CD4-positive, alpha-beta memory T cell (primary cell): ENCODE measurements at regions of chr6 and their contacts with region 1.

Region 1: GRCh38 chr6:143536865-143537691 is 25.6 kb upstream of the FUCA2 start:
- DNase-seq: peak; percentile 53 to 64 (median 61)
- H3K4me3 ChIP-seq: peak overlapping the region; percentile 36 to 71
- H3K4me3 Mint-ChIP-seq: peak overlapping the region; percentile 88 to 95 (median 92)
- H3K27ac ChIP-seq: peak overlapping the region; percentile 73
- H3K27ac Mint-ChIP-seq: peak overlapping the region; percentile 91 to 96 (median 96)
- H3K4me1 ChIP-seq: peaks cover 54% of the 10 kb centered on the region
- H3K4me1 Mint-ChIP-seq: peaks cover 35 to 55% (median 47%) of the 10 kb centered on the region in 4 donors
- H3K27me3 ChIP-seq: no peaks in the 10 kb centered on the region
- H3K27me3 Mint-ChIP-seq: no peaks in the 10 kb centered on the region

Region 2: DNA sequence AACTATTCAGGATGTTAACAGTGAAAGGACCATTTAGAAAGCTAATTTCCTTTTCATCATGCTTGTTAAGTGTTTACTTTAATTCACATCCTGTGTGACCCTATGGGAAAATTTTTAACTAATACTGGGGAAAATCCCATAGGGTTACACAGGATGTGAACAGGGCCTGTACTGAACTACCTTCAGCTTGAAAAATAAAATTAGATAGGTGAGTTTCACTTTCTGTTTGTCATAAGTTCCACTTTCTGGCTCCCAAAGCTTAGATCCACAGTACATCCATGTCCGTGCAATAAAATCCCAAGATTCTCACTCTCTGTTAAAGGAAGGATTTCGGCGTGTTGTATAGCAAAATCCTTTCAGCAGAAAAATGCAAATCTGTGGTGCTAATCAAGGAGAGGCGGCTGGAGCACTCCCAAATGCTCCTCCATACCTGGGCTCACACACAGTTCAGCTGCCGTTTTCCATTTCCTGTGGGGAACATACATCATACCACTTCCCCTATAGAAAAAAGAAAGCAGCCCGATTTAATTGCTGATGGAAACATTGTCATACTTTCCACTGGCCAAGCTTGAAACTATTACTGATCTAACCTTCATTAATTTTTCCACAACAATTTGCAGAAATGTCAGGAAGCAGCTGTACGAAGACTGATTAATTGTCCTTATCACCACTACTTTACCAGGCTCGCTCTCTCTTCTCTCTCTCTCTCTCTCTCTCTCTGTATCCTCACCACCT is 717.3 kb before region 1 on chr6:
- CTCF ChIA-PET with region 1: no interaction called
- POLR2A ChIA-PET with region 1: no interaction called
- intact Hi-C with region 1: no loop called
- DNase-seq: peak; percentile 45 to 84 (median 52)
- H3K4me3 ChIP-seq: peak overlapping the region; percentile 37 to 48
- H3K4me3 Mint-ChIP-seq: peak overlapping the region; percentile 76 to 92 (median 90)
- H3K27ac ChIP-seq: peak overlapping the region; percentile 76
- H3K27ac Mint-ChIP-seq: peak overlapping the region; percentile 87 to 100 (median 94)
- H3K4me1 ChIP-seq: peaks cover 88% of the 10 kb centered on the region
- H3K4me1 Mint-ChIP-seq: peaks cover 62 to 84% (median 71%) of the 10 kb centered on the region in 4 donors
- H3K27me3 ChIP-seq: no peaks in the 10 kb centered on the region
- H3K27me3 Mint-ChIP-seq: peaks cover 0 to 3% of the 10 kb centered on the region in 2 donors

Region 3: DNA sequence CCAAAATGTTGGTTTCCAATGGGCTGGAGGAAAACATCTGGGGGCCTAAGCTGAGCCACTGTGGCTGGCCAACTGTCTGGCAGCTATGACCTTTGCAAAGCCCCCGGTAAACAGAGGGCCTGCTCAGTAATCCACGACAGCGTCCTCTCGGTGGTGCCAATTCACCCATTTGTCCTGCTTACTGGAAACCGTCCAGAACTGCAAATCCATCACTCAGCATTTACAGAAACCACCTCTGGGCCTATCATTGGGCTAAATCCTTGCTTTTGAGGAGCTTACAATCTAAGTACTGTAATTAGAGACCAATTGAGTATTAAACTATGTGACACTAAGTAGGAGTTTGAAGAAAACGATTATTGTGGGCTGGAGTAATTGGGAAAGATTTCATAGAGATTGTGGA is 117.6 kb before region 1 on chr6:
- CTCF ChIA-PET with region 1: no interaction called
- POLR2A ChIA-PET with region 1: no interaction called
- intact Hi-C with region 1: no loop called
- DNase-seq: no peak
- H3K4me3 ChIP-seq: no peak overlapping the region
- H3K4me3 Mint-ChIP-seq: no peak overlapping the region
- H3K27ac ChIP-seq: no peak overlapping the region
- H3K27ac Mint-ChIP-seq: no peak overlapping the region
- H3K4me1 ChIP-seq: no peaks in the 10 kb centered on the region
- H3K4me1 Mint-ChIP-seq: no peaks in the 10 kb centered on the region
- H3K27me3 ChIP-seq: no peaks in the 10 kb centered on the region
- H3K27me3 Mint-ChIP-seq: no peaks in the 10 kb centered on the region

Region 4: DNA sequence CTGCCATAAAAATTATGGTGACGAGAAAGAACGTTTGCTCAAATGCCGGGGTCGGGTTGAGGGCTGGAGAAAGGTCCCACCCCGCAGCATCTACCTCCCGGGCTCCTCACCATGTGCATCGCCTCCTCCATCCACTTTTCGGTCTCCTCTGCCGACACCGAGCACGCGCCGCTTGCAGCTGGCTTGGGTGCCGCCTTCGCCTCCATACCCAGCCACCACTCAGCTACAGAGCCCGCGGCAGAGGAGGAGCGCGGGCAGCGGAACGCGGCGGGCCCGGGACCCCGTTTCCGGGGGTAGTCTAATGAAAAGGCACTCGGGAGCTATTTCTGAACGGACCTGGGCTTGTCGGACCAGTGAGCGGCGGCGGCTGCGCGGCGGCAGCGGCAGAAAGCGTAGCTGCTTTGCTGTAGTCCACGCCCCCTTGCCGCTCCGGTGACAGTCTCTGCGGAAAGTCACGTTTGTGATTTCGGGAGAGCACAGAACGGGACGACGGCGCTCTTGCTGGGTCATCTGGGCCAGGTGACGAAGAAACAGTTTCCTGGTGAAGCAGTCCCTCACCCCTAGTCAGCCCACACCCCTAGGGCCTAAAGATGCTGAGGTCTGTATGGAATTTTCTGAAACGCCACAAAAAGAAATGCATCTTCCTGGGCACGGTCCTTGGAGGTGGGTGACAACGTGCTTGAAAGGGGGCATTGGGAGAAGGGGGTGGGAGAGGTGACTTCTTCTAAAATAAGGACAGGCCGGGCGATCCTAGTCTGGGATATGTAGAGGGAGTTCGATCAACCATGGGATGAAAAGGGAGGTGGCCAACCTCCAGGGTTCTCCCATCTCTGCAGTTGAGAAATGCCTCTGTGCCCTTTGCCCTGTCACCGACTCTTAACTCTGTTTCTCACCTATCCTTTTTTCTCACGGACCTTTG is 86.4 kb before region 1 on chr6 and contains the starts of genes ADAT2 and PEX3:
- CTCF ChIA-PET with region 1: no interaction called
- POLR2A ChIA-PET with region 1: interaction called, 10 read pairs
- intact Hi-C with region 1: loop called (anchors 2 kb)
- DNase-seq: peak; percentile 94 to 95 (median 94)
- H3K4me3 ChIP-seq: peak within 1 kb of the TSS; percentile 95 to 99
- H3K4me3 Mint-ChIP-seq: peak within 1 kb of the TSS; percentile 94 to 100 (median 98)
- H3K27ac ChIP-seq: peak within 1 kb of the TSS; percentile 67
- H3K27ac Mint-ChIP-seq: peak within 1 kb of the TSS; percentile 86 to 99 (median 97)
- H3K4me1 ChIP-seq: peaks cover 28% of the 10 kb centered on the region
- H3K4me1 Mint-ChIP-seq: peaks cover 25 to 49% (median 36%) of the 10 kb centered on the region in 4 donors
- H3K27me3 ChIP-seq: no peaks in the 10 kb centered on the region
- H3K27me3 Mint-ChIP-seq: no peaks in the 10 kb centered on the region
- total RNA-seq, gene ADAT2: 10.5 to 11.2 TPM
- total RNA-seq, gene PEX3: 20.8 to 23.5 TPM

Region 5: DNA sequence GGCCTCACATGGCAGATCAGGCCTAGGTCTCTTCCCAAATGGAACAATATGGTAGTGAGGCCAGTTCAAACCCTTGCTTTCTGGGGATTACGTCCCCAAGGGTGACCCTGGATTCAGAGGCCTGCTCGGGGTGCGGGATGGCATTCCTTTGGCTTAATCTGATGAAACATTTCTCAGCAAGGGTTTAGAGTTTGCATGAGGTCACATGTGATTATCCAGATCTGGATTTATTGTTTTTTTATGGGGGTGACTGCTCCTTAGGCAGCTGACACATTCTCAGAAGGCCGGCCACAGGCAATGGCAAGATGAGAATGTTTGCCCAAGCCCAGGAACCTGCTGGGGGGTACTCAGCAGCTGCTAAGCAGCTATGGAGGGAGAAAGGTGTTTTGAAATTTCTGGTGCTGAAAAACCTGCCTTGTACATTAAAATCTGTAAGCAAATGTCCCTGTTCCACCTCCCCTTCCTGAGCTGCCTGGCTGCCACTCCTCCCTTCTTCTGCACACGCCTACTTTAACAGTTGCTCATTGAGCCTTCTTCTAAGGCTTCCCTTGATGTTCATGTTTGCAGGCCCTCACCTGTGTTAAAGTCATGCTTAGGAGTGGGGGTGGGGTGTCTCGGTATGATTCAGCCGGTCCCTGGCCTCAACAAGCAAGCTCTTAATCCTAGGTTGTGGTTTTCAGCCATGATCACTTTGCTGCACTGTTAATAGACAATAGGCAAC is 12.3 kb after region 1 on chr6:
- CTCF ChIA-PET with region 1: interaction called, 7 read pairs
- POLR2A ChIA-PET with region 1: interaction called, 53 read pairs
- intact Hi-C with region 1: loop called (anchors 1 kb)
- DNase-seq: peak in 1 of 5 donors; percentile 72
- H3K4me3 ChIP-seq: no peak overlapping the region
- H3K4me3 Mint-ChIP-seq: peak overlapping the region in 7 of 8 donors; percentile 6 to 78 (median 46)
- H3K27ac ChIP-seq: no peak overlapping the region
- H3K27ac Mint-ChIP-seq: peak overlapping the region; percentile 52 to 88 (median 68)
- H3K4me1 ChIP-seq: peaks cover 97% of the 10 kb centered on the region
- H3K4me1 Mint-ChIP-seq: peaks cover 76 to 96% (median 88%) of the 10 kb centered on the region in 4 donors
- H3K27me3 ChIP-seq: no peaks in the 10 kb centered on the region
- H3K27me3 Mint-ChIP-seq: no peaks in the 10 kb centered on the region

Region 6: DNA sequence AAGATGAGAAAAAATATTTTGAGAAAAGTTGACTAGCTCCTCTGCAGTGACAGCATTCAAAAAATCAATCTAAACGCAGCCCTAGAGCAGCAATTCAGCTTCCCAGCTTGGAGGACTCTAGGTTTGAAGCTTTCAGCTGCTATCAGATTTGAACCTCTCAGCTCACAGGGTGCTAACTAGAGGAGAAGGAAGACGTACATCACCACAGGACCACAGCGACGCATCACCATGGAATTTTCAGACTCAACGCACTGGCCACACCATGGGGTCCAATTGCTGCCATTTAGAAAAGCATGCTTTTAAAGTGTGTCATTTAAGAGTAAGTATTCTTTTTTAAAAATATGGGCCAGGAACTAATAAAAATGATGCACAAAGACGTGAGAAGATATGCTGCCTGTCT is 19.5 kb after region 1 on chr6:
- CTCF ChIA-PET with region 1: interaction called, 5 read pairs
- POLR2A ChIA-PET with region 1: interaction called, 53 read pairs
- intact Hi-C with region 1: loop called (anchors 1 kb)
- DNase-seq: no peak
- H3K4me3 ChIP-seq: no peak overlapping the region
- H3K4me3 Mint-ChIP-seq: peak overlapping the region in 7 of 8 donors; percentile 11 to 79 (median 43)
- H3K27ac ChIP-seq: no peak overlapping the region
- H3K27ac Mint-ChIP-seq: peak overlapping the region in 6 of 7 donors; percentile 43 to 90 (median 72)
- H3K4me1 ChIP-seq: peaks cover 67% of the 10 kb centered on the region
- H3K4me1 Mint-ChIP-seq: peaks cover 57 to 89% (median 74%) of the 10 kb centered on the region in 4 donors
- H3K27me3 ChIP-seq: no peaks in the 10 kb centered on the region
- H3K27me3 Mint-ChIP-seq: no peaks in the 10 kb centered on the region

Region 7: DNA sequence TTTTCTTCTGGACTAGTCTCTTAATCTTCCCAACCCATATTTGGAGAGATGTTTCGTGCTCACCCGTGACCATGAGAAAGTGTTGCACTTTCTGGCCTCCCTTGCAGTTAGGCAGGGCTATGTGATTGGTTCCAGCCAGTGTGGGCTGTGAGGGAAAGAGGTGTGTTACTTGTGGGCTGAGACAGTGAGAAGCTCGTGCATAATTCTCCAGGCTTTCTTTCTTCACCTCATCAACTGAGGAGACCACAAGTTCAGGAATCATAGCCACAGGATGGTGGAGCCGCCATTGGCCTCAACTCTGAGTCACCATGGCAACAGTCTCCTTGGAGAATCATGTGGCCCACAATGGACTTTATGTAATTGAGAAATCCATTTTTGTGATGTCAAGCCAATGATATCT is 32.0 kb after region 1 on chr6:
- CTCF ChIA-PET with region 1: interaction called, 20 read pairs
- POLR2A ChIA-PET with region 1: interaction called, 11 read pairs
- intact Hi-C with region 1: loop called (anchors 2 kb)
- DNase-seq: peak in 1 of 5 donors; percentile 41
- H3K4me3 ChIP-seq: no peak overlapping the region
- H3K4me3 Mint-ChIP-seq: no peak overlapping the region
- H3K27ac ChIP-seq: no peak overlapping the region
- H3K27ac Mint-ChIP-seq: peak overlapping the region; percentile 7 to 74 (median 40)
- H3K4me1 ChIP-seq: peaks cover 22% of the 10 kb centered on the region
- H3K4me1 Mint-ChIP-seq: peaks cover 29 to 60% (median 38%) of the 10 kb centered on the region in 4 donors
- H3K27me3 ChIP-seq: no peaks in the 10 kb centered on the region
- H3K27me3 Mint-ChIP-seq: no peaks in the 10 kb centered on the region

Region 8: GRCh38 chr6:143575440-143575839 is 38.4 kb after region 1 on chr6:
- CTCF ChIA-PET with region 1: interaction called, 12 read pairs
- POLR2A ChIA-PET with region 1: interaction called, 5 read pairs
- intact Hi-C with region 1: loop called (anchors 2 kb)
- DNase-seq: peak; percentile 54 to 72 (median 68)
- H3K4me3 ChIP-seq: no peak overlapping the region
- H3K4me3 Mint-ChIP-seq: no peak overlapping the region
- H3K27ac ChIP-seq: no peak overlapping the region
- H3K27ac Mint-ChIP-seq: peak overlapping the region in 4 of 7 donors; percentile 22 to 43 (median 32)
- H3K4me1 ChIP-seq: no peaks in the 10 kb centered on the region
- H3K4me1 Mint-ChIP-seq: peaks cover 11 to 35% (median 19%) of the 10 kb centered on the region in 4 donors
- H3K27me3 ChIP-seq: no peaks in the 10 kb centered on the region
- H3K27me3 Mint-ChIP-seq: no peaks in the 10 kb centered on the region

Region 9: DNA sequence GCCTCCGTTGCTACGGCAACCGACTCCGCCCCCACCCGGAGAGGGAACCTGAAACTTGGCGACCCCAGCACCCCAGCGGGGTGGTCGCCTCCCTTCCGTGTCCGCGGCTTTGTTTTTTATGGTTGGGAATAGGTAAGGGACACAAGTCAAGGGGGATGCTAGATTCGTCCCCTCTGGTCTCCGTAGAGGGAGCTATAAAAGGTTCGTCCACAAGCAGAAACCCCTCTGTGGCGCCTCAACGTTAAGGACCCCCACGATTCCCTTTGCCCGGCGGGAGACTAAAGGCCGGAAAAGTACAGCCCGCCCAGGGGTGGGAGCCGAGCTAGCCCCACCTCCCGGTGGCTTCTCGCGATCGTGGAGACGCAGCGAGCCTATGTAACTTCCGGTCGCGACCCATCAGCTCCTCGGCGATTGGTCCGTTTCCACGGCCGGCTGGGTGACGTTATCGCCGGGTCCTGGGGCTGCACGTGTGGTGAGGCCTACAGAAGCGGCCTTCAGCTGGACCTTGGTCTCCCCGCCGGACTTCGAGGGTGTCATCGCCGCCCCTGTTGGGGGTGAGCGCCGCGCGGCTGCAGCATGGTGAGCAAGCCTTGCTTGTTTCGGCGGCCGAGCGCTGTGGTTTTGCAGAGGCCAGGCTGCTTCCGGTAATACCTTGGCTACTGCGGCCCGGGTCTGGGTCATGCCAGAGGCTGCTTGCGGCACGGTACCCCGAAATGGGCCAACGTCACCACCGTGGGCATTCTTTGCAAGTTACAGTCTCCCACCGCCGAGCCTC is 306.0 kb after region 1 on chr6 and contains the start of gene LTV1:
- CTCF ChIA-PET with region 1: interaction called, 3 read pairs
- POLR2A ChIA-PET with region 1: interaction called, 5 read pairs
- intact Hi-C with region 1: loop called (anchors 5 kb)
- DNase-seq: peak; percentile 89 to 92 (median 90)
- H3K4me3 ChIP-seq: peak within 1 kb of the TSS; percentile 54 to 90
- H3K4me3 Mint-ChIP-seq: peak within 1 kb of the TSS; percentile 93 to 97 (median 95)
- H3K27ac ChIP-seq: peak within 1 kb of the TSS; percentile 92
- H3K27ac Mint-ChIP-seq: peak within 1 kb of the TSS; percentile 96 to 99 (median 98)
- H3K4me1 ChIP-seq: peaks cover 15% of the 10 kb centered on the region
- H3K4me1 Mint-ChIP-seq: peaks cover 19 to 32% (median 25%) of the 10 kb centered on the region in 4 donors
- H3K27me3 ChIP-seq: no peaks in the 10 kb centered on the region
- H3K27me3 Mint-ChIP-seq: no peaks in the 10 kb centered on the region
- total RNA-seq, gene LTV1: 19.9 to 20.8 TPM